CD4-positive, alpha-beta memory T cell (primary cell): ENCODE measurements at regions of chr6 and their contacts with region 1.

Region 1: DNA sequence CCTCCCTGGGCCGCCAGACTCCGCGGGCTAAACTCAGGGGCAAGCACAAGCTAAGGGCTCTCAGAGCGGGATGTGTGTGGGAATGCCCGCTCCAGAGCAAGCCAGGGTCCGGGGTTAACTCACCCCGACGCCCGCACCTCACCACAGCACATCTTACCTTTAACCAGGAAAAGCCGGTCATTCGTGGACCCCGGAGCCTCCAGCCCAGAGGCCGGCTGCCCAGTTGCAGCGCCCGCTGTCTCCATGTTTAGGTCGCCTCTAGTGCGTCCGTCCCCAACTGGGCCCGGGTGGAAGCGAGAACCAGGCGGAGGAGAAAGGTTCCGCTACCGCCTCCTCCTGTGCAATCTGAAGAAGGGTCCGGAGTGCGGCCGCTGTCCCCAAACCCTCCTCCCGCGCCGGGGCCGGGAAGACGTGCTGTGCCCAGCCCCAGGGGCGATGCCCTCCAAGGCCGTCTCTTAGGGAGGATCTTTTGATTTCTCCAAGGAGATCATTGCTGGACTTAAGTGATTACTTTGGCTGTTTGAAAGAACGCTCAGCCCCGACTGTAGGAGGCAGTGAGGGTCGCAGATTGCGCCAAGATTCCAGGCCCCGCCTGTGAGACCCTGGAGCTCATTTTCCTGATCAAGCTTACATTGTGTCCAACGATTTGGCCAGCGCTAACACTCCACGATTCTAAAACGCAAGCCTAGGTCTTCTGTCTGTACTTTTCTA is at the start of gene TMEM242:
- DNase-seq: peak; percentile 77 to 86 (median 83)
- H3K4me3 ChIP-seq: peak within 1 kb of the TSS; percentile 79 to 82
- H3K4me3 Mint-ChIP-seq: peak within 1 kb of the TSS; percentile 94 to 97 (median 96)
- H3K27ac ChIP-seq: peak within 1 kb of the TSS; percentile 62
- H3K27ac Mint-ChIP-seq: peak within 1 kb of the TSS; percentile 89 to 94 (median 92)
- H3K4me1 ChIP-seq: peaks cover 16% of the 10 kb centered on the region
- H3K4me1 Mint-ChIP-seq: peaks cover 13 to 27% (median 17%) of the 10 kb centered on the region in 4 donors
- H3K27me3 ChIP-seq: no peaks in the 10 kb centered on the region
- H3K27me3 Mint-ChIP-seq: peaks cover 5 to 10% of the 10 kb centered on the region in 2 donors
- total RNA-seq, gene TMEM242: 12.7 to 14.1 TPM

Region 2: DNA sequence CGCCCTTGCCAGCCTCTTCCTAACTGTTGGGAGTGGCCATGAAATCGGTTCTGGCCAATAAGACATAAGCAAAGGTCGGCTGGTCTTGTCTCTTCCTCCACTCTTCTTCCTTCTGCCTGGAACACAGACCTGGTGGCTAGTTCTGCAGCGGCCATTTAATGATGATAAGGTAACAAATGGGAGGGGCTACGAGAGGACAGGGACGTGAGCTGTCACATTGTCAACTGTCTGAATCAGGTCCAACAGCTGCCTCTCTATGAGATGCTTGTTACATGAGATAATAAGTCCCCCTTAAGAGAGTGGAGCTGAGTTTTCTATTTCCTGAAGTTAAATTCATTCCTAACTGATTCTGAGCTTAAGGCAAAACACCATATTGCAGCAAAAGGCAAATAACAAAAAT is 12.4 kb after region 1 on chr6:
- CTCF ChIA-PET with region 1: interaction called, 32 read pairs
- POLR2A ChIA-PET with region 1: interaction called, 5 read pairs
- intact Hi-C with region 1: no loop called
- DNase-seq: no peak
- H3K4me3 ChIP-seq: no peak overlapping the region
- H3K4me3 Mint-ChIP-seq: no peak overlapping the region
- H3K27ac ChIP-seq: no peak overlapping the region
- H3K27ac Mint-ChIP-seq: no peak overlapping the region
- H3K4me1 ChIP-seq: no peaks in the 10 kb centered on the region
- H3K4me1 Mint-ChIP-seq: peaks cover 0 to 1% (median 0%) of the 10 kb centered on the region in 4 donors
- H3K27me3 ChIP-seq: no peaks in the 10 kb centered on the region
- H3K27me3 Mint-ChIP-seq: peaks cover 26 to 39% of the 10 kb centered on the region in 2 donors

Region 3: DNA sequence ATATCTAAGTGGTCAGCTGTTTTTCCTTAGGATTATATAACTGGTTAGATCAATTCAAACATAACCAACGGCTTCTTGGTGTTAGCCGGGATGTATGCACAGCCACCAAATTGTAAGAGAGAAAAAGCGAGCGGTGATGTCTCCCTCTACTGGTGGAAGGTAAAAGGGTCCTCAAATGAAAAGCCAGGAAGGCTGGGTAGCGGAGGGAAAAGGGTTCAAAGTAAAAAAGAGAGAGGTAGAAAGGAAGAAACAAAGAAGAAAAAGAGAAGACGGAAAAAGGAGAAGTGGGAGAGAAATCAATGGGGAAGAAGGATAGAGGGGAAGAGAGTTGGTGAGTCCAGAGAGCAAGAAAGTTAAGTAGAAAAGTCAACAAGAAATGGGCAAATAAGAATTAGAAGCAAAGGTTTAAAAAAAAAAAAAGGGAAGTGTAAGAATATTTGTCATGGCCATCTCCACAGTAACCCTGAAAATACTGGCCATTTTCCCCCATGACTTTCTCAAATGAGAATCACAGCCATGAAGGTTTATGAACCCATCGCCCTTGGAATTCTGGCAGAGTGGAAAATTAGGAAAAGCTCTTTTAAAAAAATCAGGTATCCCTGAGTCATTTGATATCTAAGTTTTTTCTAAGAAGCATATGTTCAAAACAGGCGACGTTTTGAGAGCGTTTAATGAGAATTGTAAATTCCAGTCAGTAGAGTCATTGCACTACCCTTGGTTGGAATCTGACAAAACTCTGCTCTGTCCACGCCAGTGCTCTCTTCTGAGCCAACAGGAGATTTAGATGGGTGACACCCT is 344.0 kb after region 1 on chr6:
- CTCF ChIA-PET with region 1: interaction called, 102 read pairs
- POLR2A ChIA-PET with region 1: interaction called, 6 read pairs
- intact Hi-C with region 1: no loop called
- DNase-seq: peak in 4 of 5 donors; percentile 45 to 61 (median 51)
- H3K4me3 ChIP-seq: no peak overlapping the region
- H3K4me3 Mint-ChIP-seq: peak overlapping the region in 1 of 8 donors; percentile 16
- H3K27ac ChIP-seq: no peak overlapping the region
- H3K27ac Mint-ChIP-seq: peak overlapping the region in 3 of 7 donors; percentile 5 to 75 (median 53)
- H3K4me1 ChIP-seq: no peaks in the 10 kb centered on the region
- H3K4me1 Mint-ChIP-seq: peaks cover 3 to 5% (median 5%) of the 10 kb centered on the region in 4 donors
- H3K27me3 ChIP-seq: no peaks in the 10 kb centered on the region
- H3K27me3 Mint-ChIP-seq: peaks cover 2 to 4% of the 10 kb centered on the region in 2 donors